ENCODE measurements at regions of chr1 and their contacts with region 1.

Region 1: GRCh38 chr1:53393325-53393792 is 65.5 kb upstream of the LRP8 start:
- DNase-seq: peak; percentile 86
- H3K4me3 ChIP-seq: peak overlapping the region in 1 of 2 experiments; percentile 2; a peak in 1 of 4 replicates
- H3K27ac ChIP-seq: no peak overlapping the region
- H3K4me1 ChIP-seq: peaks cover 0 to 44% of the 10 kb centered on the region in 2 experiments; a peak in 2 of 4 replicates
- H3K27me3 ChIP-seq: peaks cover 2% of the 10 kb centered on the region; the same call in 1 of the 2 replicates
- CTCF ChIP-seq: peak; percentile 89
- EP300 ChIP-seq: 0 out of 4 replicates have a peak, but pooled peaks of 1 of the 2 experiments have one; percentile 10
- RAD21 ChIP-seq: peak; percentile 97

Region 2: GRCh38 chr1:53255031-53255430 is 138.3 kb before region 1 on chr1:
- CTCF ChIA-PET with region 1: interaction called, 15 read pairs
- POLR2A ChIA-PET with region 1: no interaction called
- DNase-seq: no peak
- H3K4me3 ChIP-seq: no peak overlapping the region
- H3K27ac ChIP-seq: no peak overlapping the region
- H3K4me1 ChIP-seq: peaks cover 0 to 11% of the 10 kb centered on the region in 2 experiments; a peak in 1 of 4 replicates
- H3K27me3 ChIP-seq: no peaks in the 10 kb centered on the region
- CTCF ChIP-seq: peak; percentile 13; the same call in 1 of the 2 replicates
- EP300 ChIP-seq: no peak
- RAD21 ChIP-seq: no peak

Region 3: DNA sequence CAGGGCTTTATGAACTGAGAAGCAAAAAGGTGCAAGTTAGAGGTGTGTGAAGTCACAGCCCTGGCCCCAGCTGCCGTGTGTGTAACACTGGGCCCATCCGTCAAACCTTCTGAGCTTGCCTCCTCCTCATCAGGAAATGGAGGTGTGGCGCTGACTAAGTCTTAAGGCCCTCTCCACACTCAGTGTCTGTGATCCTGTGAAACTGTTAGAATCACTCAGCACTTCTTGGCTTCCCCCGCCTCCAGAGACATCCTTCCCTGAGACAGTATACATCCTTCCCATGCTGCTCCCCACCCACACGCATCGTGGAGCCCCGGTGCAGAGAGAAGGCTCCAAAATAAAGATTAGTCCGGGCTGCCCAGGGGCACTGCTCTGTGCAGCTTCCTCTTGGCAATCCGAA is 98.8 kb before region 1 on chr1:
- CTCF ChIA-PET with region 1: interaction called, 81 read pairs
- POLR2A ChIA-PET with region 1: no interaction called
- DNase-seq: no peak
- H3K4me3 ChIP-seq: no peak overlapping the region
- H3K27ac ChIP-seq: no peak overlapping the region; a peak in 1 of 4 replicates
- H3K4me1 ChIP-seq: peaks cover 4 to 64% of the 10 kb centered on the region in 2 experiments; a peak in 3 of 4 replicates
- H3K27me3 ChIP-seq: no peaks in the 10 kb centered on the region
- CTCF ChIP-seq: no peak
- EP300 ChIP-seq: no peak
- RAD21 ChIP-seq: no peak

Region 4: GRCh38 chr1:53344891-53345838 is 48.2 kb before region 1 on chr1:
- CTCF ChIA-PET with region 1: interaction called, 38 read pairs
- POLR2A ChIA-PET with region 1: interaction called, 3 read pairs
- DNase-seq: no peak
- H3K4me3 ChIP-seq: no peak overlapping the region
- H3K27ac ChIP-seq: no peak overlapping the region
- H3K4me1 ChIP-seq: peaks cover 0 to 18% of the 10 kb centered on the region in 2 experiments; a peak in 1 of 4 replicates
- H3K27me3 ChIP-seq: no peaks in the 10 kb centered on the region
- CTCF ChIP-seq: no peak
- EP300 ChIP-seq: no peak
- RAD21 ChIP-seq: no peak

Region 5: GRCh38 chr1:53381790-53382401 is 11.5 kb before region 1 on chr1:
- CTCF ChIA-PET with region 1: interaction called, 11 read pairs
- POLR2A ChIA-PET with region 1: no interaction called
- DNase-seq: no peak
- H3K4me3 ChIP-seq: no peak overlapping the region
- H3K27ac ChIP-seq: no peak overlapping the region
- H3K4me1 ChIP-seq: peaks cover 2 to 5% of the 10 kb centered on the region in 2 experiments; a peak in 2 of 4 replicates
- H3K27me3 ChIP-seq: no peaks in the 10 kb centered on the region
- CTCF ChIP-seq: no peak
- EP300 ChIP-seq: no peak
- RAD21 ChIP-seq: no peak

Region 6: GRCh38 chr1:53462769-53463501 is 69.6 kb after region 1 on chr1:
- CTCF ChIA-PET with region 1: interaction called, 19 read pairs
- POLR2A ChIA-PET with region 1: no interaction called
- DNase-seq: peak; percentile 81
- H3K4me3 ChIP-seq: no peak overlapping the region
- H3K27ac ChIP-seq: peak overlapping the region in 1 of 2 experiments; percentile 76; a peak in 2 of 4 replicates
- H3K4me1 ChIP-seq: peaks cover 0 to 18% of the 10 kb centered on the region in 2 experiments; a peak in 1 of 4 replicates
- H3K27me3 ChIP-seq: no peaks in the 10 kb centered on the region
- CTCF ChIP-seq: no peak
- EP300 ChIP-seq: peak in 1 of 2 experiments; percentile 36; a peak in 1 of 4 replicates
- RAD21 ChIP-seq: no peak